Endothelial cell of umbilical vein (primary cell): ENCODE measurements at regions of chr13 and their contacts with region 1.

Region 1: DNA sequence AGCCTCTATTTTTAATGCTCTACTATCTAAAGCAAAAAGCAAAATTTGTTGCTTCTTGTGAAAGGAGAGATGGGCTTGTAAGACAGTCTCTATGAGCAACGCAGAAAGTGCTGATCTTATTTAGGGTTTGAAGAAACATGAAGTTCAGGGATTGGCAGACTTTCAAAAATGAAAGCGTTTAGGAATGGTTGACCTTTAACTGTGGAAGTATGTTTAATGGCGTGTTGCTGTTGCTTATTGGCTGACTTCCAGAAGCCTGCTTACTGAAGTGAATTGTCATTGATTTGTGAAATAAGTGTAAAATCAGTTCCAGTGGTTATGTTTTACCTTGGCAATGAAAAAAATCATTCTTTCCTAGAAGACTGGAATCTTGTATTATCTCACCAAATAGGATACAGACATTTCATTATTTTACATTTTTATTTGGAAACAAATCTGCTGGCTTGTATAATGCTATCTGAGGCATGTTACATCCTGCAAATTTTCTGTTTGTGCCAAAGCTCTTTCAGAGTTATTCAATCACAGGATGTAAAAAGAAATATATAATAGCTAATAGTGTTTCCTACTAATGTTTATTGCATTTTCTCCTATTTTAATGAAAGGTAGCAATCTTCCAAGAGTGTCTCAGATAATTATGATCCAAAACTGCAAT is 221.3 kb upstream of the SLITRK6 start:
- DNase-seq: no peak
- H3K4me3 ChIP-seq: no peak overlapping the region
- H3K27ac ChIP-seq: no peak overlapping the region
- H3K4me1 ChIP-seq: no peaks in the 10 kb centered on the region
- H3K27me3 ChIP-seq: no peaks in the 10 kb centered on the region
- CTCF ChIP-seq: no peak
- POLR2A ChIP-seq: no peak

Region 2: GRCh38 chr13:87954091-87954490 is 1933.6 kb after region 1 on chr13:
- CTCF ChIA-PET with region 1: no interaction called
- POLR2A ChIA-PET with region 1: no interaction called
- dilution Hi-C with region 1: no loop called
- intact Hi-C with region 1: loop called (anchors 10 kb)
- DNase-seq: no peak
- H3K4me3 ChIP-seq: no peak overlapping the region
- H3K27ac ChIP-seq: no peak overlapping the region
- H3K4me1 ChIP-seq: no peaks in the 10 kb centered on the region
- H3K27me3 ChIP-seq: no peaks in the 10 kb centered on the region
- CTCF ChIP-seq: no peak
- POLR2A ChIP-seq: no peak